ENCODE measurements at regions of chrX and their contacts with region 1.

Region 1: DNA sequence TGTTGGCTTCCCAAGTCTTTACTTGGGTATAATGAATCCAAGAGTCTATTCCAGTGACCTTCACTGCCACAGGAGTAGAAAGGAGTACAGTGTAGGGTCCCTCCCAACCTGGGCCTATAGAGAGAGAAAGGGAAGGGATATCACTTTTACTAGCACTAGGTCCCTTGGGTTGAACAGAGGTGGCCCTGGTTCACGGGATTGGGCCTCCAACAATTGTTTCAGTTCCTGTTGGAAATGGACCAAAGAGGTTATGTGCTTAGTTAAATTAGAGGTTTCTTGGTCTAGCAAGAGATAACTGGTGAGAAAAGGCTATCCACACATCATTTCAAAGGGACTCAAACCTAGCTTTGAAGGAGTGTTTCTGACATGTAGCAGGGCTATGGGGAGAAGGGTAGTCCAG is 57.1 kb upstream of the MED14 start:
- DNase-seq: no peak
- ATAC-seq: no peak
- H3K4me3 ChIP-seq: no peak overlapping the region
- H3K4me3 Mint-ChIP-seq: no peak overlapping the region
- H3K27ac ChIP-seq: no peak overlapping the region
- H3K27ac Mint-ChIP-seq: no peak overlapping the region
- H3K4me1 ChIP-seq: peaks cover 5% of the 10 kb centered on the region
- H3K4me1 Mint-ChIP-seq: peaks cover 0 to 6% of the 10 kb centered on the region in 2 donors
- H3K27me3 ChIP-seq: no peaks in the 10 kb centered on the region
- H3K27me3 Mint-ChIP-seq: peaks cover 6 to 34% of the 10 kb centered on the region in 2 donors
- CTCF ChIP-seq: no peak

Region 2: GRCh38 chrX:40543661-40544328 is 248.6 kb before region 1 on chrX:
- intact Hi-C with region 1: loop called (anchors 2 kb)
- DNase-seq: peak in 1 of 2 donors; percentile 72
- ATAC-seq: peak in 2 of 3 donors; percentile 43 to 57
- H3K4me3 ChIP-seq: no peak overlapping the region
- H3K4me3 Mint-ChIP-seq: no peak overlapping the region
- H3K27ac ChIP-seq: no peak overlapping the region
- H3K27ac Mint-ChIP-seq: no peak overlapping the region
- H3K4me1 ChIP-seq: peaks cover 11% of the 10 kb centered on the region
- H3K4me1 Mint-ChIP-seq: peaks cover 12 to 23% of the 10 kb centered on the region in 2 donors
- H3K27me3 ChIP-seq: no peaks in the 10 kb centered on the region
- H3K27me3 Mint-ChIP-seq: peaks cover 5 to 30% of the 10 kb centered on the region in 2 donors
- CTCF ChIP-seq: peak; percentile 69

Region 3: DNA sequence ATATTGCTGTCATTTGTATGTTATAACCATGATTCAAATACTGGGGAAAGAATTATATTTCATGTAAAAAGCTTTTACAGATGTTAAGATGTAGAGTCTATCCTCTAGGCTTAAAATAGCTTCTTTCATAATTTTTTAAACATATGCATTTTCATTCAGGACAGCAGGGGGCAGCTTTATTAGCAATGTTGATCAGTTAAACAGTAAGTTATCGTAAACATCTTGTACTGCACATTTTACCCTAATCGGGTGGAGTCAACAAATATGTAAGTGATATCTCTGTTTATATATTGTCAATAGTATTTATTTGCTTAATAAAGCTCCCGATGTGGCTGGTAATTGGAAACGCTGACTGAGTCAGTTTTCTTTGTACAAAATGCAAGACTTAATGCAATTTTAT is 85.5 kb after region 1 on chrX:
- intact Hi-C with region 1: no loop called
- DNase-seq: peak in 1 of 2 donors; percentile 62
- ATAC-seq: no peak
- H3K4me3 ChIP-seq: no peak overlapping the region
- H3K4me3 Mint-ChIP-seq: no peak overlapping the region
- H3K27ac ChIP-seq: no peak overlapping the region
- H3K27ac Mint-ChIP-seq: no peak overlapping the region
- H3K4me1 ChIP-seq: no peaks in the 10 kb centered on the region
- H3K4me1 Mint-ChIP-seq: no peaks in the 10 kb centered on the region
- H3K27me3 ChIP-seq: no peaks in the 10 kb centered on the region
- H3K27me3 Mint-ChIP-seq: peaks cover 4 to 39% of the 10 kb centered on the region in 2 donors
- CTCF ChIP-seq: peak; percentile 33

Measured in natural killer cell (primary cell).